Right lobe of liver (tissue), 6 donors: ENCODE measurements at regions of chr1 and their contacts with region 1.

Region 1: GRCh38 chr1:17229383-17229782 is 19.5 kb upstream of the PADI3 start:
- DNase-seq: no peak
- ATAC-seq: no peak
- H3K4me3 ChIP-seq: no peak overlapping the region
- H3K27ac ChIP-seq: no peak overlapping the region
- H3K4me1 ChIP-seq: no peaks in the 10 kb centered on the region
- H3K27me3 ChIP-seq: no peaks in the 10 kb centered on the region
- CTCF ChIP-seq: no peak
- POLR2A ChIP-seq: no peak

Region 2: GRCh38 chr1:17125756-17126237 is 103.6 kb before region 1 on chr1:
- intact Hi-C with region 1: loop called (anchors 5 kb)
- DNase-seq: peak; percentile 90 to 92 (median 90)
- ATAC-seq: peak; percentile 93 to 97 (median 94)
- H3K4me3 ChIP-seq: no peak overlapping the region
- H3K27ac ChIP-seq: no peak overlapping the region
- H3K4me1 ChIP-seq: peaks cover 0 to 3% (median 0%) of the 10 kb centered on the region in 4 donors
- H3K27me3 ChIP-seq: no peaks in the 10 kb centered on the region
- CTCF ChIP-seq: peak; percentile 97 to 99 (median 97)
- POLR2A ChIP-seq: no peak